ENCODE measurements at regions of chr2 and their contacts with region 1.

Region 1: DNA sequence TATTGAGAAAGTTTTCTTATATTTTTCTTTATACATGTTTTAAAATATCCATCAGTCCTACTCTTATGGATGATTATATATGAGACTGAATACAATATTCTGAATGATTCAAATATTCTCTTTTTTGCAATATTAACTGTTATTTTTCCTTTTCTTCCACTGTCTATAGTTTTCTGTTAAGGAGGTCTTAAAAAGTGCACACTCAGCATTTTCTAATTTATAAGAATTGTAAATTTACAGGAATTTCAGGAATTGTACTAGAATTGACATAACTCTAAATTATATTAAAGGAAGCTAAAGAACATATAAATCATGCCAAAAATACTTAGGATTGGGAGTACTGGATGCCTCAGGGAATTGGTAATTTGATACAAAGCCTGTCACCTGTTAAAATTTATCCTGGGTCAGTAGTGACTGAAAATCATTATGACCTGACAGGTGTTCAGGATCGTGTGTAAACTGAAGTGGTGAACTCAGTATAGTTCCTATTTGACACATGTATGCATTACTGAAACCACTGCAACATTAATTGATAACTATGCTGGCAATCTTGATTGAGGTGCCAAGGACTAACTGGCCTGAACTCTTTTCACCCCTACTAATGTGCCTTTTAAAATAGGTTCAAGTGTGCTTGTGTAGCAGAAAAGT is 30.4 kb downstream of the MSTN start:
- DNase-seq: no peak
- H3K4me3 Mint-ChIP-seq: no peak overlapping the region
- H3K27ac Mint-ChIP-seq: no peak overlapping the region
- H3K4me1 Mint-ChIP-seq: no peaks in the 10 kb centered on the region
- H3K27me3 Mint-ChIP-seq: no peaks in the 10 kb centered on the region
- CTCF ChIP-seq: no peak

Region 2: GRCh38 chr2:189913821-189914220 is 118.3 kb before region 1 on chr2:
- CTCF ChIA-PET with region 1: no interaction called
- intact Hi-C with region 1: loop called (anchors 5 kb)
- DNase-seq: no peak
- H3K4me3 Mint-ChIP-seq: no peak overlapping the region
- H3K27ac Mint-ChIP-seq: no peak overlapping the region
- H3K4me1 Mint-ChIP-seq: no peaks in the 10 kb centered on the region
- H3K27me3 Mint-ChIP-seq: no peaks in the 10 kb centered on the region
- CTCF ChIP-seq: no peak

Region 3: DNA sequence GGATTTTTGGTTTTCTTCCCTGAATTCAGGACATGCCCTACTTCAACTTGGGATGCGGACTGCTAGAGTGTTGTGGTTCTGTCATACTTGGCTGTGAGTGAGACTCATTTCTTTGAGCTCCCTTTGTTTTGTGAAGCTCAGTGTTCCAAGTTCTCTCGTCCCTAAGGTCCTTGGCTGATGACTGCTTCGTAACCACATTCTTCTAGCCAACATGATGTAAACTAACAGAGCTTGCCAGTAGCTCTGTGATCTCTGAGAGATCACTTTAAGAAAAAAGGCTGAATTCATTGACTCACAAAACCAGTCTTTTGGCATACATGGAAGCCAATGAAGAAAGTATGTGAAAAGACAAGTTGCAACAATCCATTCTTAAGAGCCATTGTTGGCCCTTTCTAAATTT is 127.4 kb after region 1 on chr2:
- CTCF ChIA-PET with region 1: no interaction called
- intact Hi-C with region 1: no loop called
- DNase-seq: no peak
- H3K4me3 Mint-ChIP-seq: no peak overlapping the region
- H3K27ac Mint-ChIP-seq: no peak overlapping the region
- H3K4me1 Mint-ChIP-seq: no peaks in the 10 kb centered on the region
- H3K27me3 Mint-ChIP-seq: no peaks in the 10 kb centered on the region
- CTCF ChIP-seq: no peak